ENCODE measurements at regions of chr18 and their contacts with region 1.

Region 1: DNA sequence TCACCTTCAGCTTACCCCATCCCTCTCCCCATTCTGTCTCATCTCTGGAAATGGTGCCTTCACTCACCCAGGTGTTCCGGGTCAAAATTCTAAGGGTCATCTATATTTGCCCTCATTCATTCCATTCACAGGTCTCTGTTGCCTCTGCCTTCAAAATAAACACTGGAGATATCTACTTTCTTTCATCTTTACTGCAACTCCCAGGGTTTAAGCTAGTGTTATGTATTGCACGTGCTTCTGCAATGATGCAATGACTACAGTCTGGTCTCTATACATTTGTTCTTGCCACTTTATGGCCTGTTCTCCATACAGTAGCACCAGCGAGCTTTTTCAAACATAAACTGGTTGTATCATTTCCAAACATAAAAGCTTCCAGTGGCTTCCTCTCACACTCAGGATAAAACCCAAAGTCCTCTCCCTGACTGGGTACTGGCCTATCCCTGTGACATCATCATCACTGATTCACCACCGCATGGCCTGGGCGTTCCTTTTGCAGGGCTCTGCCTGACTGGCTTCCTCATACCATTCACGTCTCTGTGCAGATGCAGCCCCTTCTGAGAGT is 14.3 kb downstream of the DSG2 start:
- DNase-seq: no peak
- ATAC-seq: peak in 3 of 8 donors; percentile 44 to 57 (median 56)
- H3K4me3 ChIP-seq: no peak overlapping the region
- H3K27ac ChIP-seq: no peak overlapping the region
- H3K4me1 ChIP-seq: peaks cover 0 to 23% (median 3%) of the 10 kb centered on the region in 9 donors
- H3K27me3 ChIP-seq: no peaks in the 10 kb centered on the region
- CTCF ChIP-seq: no peak

Region 2: GRCh38 chr18:30971338-30971956 is 540.8 kb before region 1 on chr18:
- intact Hi-C with region 1: loop called in 2 of 10 experiments (anchors 5 to 10 kb)
- DNase-seq: no peak
- ATAC-seq: no peak
- H3K4me3 ChIP-seq: no peak overlapping the region
- H3K27ac ChIP-seq: no peak overlapping the region
- H3K4me1 ChIP-seq: no peaks in the 10 kb centered on the region
- H3K27me3 ChIP-seq: no peaks in the 10 kb centered on the region
- CTCF ChIP-seq: peak; percentile 33 to 73 (median 62)

Region 3: GRCh38 chr18:30999186-30999585 is 513.1 kb before region 1 on chr18:
- intact Hi-C with region 1: loop called in 2 of 10 experiments (anchors 10 kb)
- DNase-seq: no peak
- ATAC-seq: no peak
- H3K4me3 ChIP-seq: no peak overlapping the region
- H3K27ac ChIP-seq: no peak overlapping the region
- H3K4me1 ChIP-seq: no peaks in the 10 kb centered on the region
- H3K27me3 ChIP-seq: peaks cover 0 to 11% (median 0%) of the 10 kb centered on the region in 7 donors
- CTCF ChIP-seq: peak in 6 of 9 donors; percentile 2 to 45 (median 30)

Region 4: GRCh38 chr18:31267823-31268481 is 244.3 kb before region 1 on chr18:
- intact Hi-C with region 1: loop called in 3 of 10 experiments (anchors 2 to 10 kb)
- DNase-seq: no peak
- ATAC-seq: no peak
- H3K4me3 ChIP-seq: no peak overlapping the region
- H3K27ac ChIP-seq: no peak overlapping the region
- H3K4me1 ChIP-seq: peaks cover 0 to 19% (median 12%) of the 10 kb centered on the region in 9 donors
- H3K27me3 ChIP-seq: no peaks in the 10 kb centered on the region
- CTCF ChIP-seq: no peak

Region 5: GRCh38 chr18:31343454-31343853 is 168.8 kb before region 1 on chr18:
- intact Hi-C with region 1: no loop called
- DNase-seq: no peak
- ATAC-seq: no peak
- H3K4me3 ChIP-seq: no peak overlapping the region
- H3K27ac ChIP-seq: no peak overlapping the region
- H3K4me1 ChIP-seq: no peaks in the 10 kb centered on the region
- H3K27me3 ChIP-seq: no peaks in the 10 kb centered on the region
- CTCF ChIP-seq: no peak

Region 6: GRCh38 chr18:31563778-31564177 is 51.5 kb after region 1 on chr18:
- intact Hi-C with region 1: no loop called
- DNase-seq: no peak
- ATAC-seq: no peak
- H3K4me3 ChIP-seq: no peak overlapping the region
- H3K27ac ChIP-seq: no peak overlapping the region
- H3K4me1 ChIP-seq: peaks cover 0 to 4% (median 0%) of the 10 kb centered on the region in 9 donors
- H3K27me3 ChIP-seq: peaks cover 0 to 11% (median 0%) of the 10 kb centered on the region in 7 donors
- CTCF ChIP-seq: peak in 4 of 9 donors; percentile 11 to 41 (median 28)